HEK293 (cell line): ENCODE measurements at regions of chr2 and their contacts with region 1.

Region 1: GRCh38 chr2:21317131-21317530 is 193.4 kb downstream of the TDRD15 start:
- H3K4me3 ChIP-seq: no peak overlapping the region
- H3K27ac ChIP-seq: no peak overlapping the region
- H3K4me1 ChIP-seq: no peaks in the 10 kb centered on the region
- CTCF ChIP-seq: no peak

Region 2: GRCh38 chr2:21042958-21043743 is 274.0 kb before region 1 on chr2:
- CTCF ChIA-PET with region 1: interaction called, 15 read pairs
- POLR2A ChIA-PET with region 1: no interaction called
- H3K4me3 ChIP-seq: no peak overlapping the region
- H3K27ac ChIP-seq: no peak overlapping the region
- H3K4me1 ChIP-seq: no peaks in the 10 kb centered on the region
- CTCF ChIP-seq: peak; percentile 74

Region 3: GRCh38 chr2:21175895-21176646 is 141.1 kb before region 1 on chr2:
- CTCF ChIA-PET with region 1: interaction called, 31 read pairs
- POLR2A ChIA-PET with region 1: no interaction called
- H3K4me3 ChIP-seq: no peak overlapping the region
- H3K27ac ChIP-seq: no peak overlapping the region
- H3K4me1 ChIP-seq: no peaks in the 10 kb centered on the region
- CTCF ChIP-seq: no peak

Region 4: DNA sequence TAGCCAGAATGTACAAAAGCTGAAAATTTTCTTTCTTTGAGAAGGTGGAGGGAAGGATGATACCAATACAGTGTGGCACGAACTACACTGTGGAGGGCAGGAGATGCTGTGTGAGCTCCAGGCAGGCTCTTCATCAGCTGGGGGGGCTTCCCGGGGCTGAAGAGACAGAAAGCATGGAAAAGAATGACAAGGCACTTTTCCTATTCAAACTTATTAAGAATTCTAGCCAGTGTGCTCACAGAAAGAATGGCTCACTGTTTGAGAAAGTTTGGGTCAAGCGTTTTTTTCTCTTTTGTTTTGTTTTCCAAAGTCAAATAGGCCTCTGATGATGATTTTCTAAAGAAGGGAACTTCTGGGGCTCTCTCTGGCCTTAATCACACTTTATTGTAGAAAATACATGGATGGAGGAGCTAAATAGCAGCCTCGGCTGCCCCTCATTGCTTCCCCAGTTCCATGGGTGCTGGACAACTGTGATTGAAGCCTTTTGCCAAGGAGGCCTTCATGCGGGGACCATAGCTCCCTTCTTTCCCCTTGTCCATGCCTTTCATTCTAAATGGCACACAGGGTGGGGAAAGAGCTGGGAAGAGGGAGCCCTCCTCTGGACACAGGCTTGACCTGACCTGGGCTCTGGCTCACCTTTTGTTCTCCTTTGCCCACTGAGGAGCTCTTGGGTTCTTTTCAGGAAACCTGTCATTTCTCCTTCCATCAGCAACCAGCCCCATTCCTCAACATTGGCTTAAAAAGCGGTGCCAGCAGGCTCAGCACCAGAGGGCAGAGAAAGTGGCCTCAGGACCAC is 62.8 kb before region 1 on chr2:
- CTCF ChIA-PET with region 1: interaction called, 10 read pairs
- POLR2A ChIA-PET with region 1: no interaction called
- H3K4me3 ChIP-seq: no peak overlapping the region
- H3K27ac ChIP-seq: no peak overlapping the region
- H3K4me1 ChIP-seq: no peaks in the 10 kb centered on the region
- CTCF ChIP-seq: no peak

Region 5: GRCh38 chr2:21467910-21468309 is 150.8 kb after region 1 on chr2:
- CTCF ChIA-PET with region 1: no interaction called
- POLR2A ChIA-PET with region 1: no interaction called
- H3K4me3 ChIP-seq: no peak overlapping the region
- H3K27ac ChIP-seq: no peak overlapping the region
- H3K4me1 ChIP-seq: no peaks in the 10 kb centered on the region
- CTCF ChIP-seq: no peak